ENCODE measurements at regions of chr5 and their contacts with region 1.

Region 1: GRCh38 chr5:22985446-22985845 is 132.3 kb upstream of the CDH12 start:
- DNase-seq: no peak
- H3K4me3 ChIP-seq: no peak overlapping the region
- CTCF ChIP-seq: no peak

Region 2: GRCh38 chr5:22947921-22948320 is 37.5 kb before region 1 on chr5:
- in situ Hi-C with region 1: no loop called
- DNase-seq: no peak
- H3K4me3 ChIP-seq: no peak overlapping the region
- CTCF ChIP-seq: no peak

Region 3: DNA sequence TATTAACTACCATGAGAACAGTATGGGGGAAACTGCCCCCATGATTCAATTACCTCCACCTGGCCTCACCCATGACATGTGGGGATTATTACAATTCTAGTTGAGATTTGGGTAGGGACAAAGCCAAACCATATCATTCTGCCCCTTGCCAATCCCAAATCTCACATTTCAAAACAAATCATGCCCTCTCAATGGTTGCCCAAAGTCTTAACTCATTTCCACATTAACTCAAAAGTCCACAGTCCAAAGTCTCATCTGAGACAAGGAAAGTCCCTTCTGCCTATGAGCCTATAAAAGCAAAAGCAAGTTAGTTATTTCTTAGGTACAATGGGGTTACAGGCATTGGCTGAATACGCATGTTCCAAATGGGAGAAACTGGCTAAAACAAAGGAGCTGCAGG is 48.4 kb after region 1 on chr5:
- in situ Hi-C with region 1: loop called (anchors 5 kb)
- DNase-seq: no peak
- H3K4me3 ChIP-seq: no peak overlapping the region
- CTCF ChIP-seq: no peak

Region 4: GRCh38 chr5:23053846-23054245 is 68.4 kb after region 1 on chr5:
- in situ Hi-C with region 1: no loop called
- DNase-seq: no peak
- H3K4me3 ChIP-seq: no peak overlapping the region
- CTCF ChIP-seq: no peak